Activated naive CD4-positive, alpha-beta T cell treated with anti-CD3 and anti-CD28 coated beads for 36 hours (primary cell): ENCODE measurements at regions of chr1 and their contacts with region 1.

Region 1: DNA sequence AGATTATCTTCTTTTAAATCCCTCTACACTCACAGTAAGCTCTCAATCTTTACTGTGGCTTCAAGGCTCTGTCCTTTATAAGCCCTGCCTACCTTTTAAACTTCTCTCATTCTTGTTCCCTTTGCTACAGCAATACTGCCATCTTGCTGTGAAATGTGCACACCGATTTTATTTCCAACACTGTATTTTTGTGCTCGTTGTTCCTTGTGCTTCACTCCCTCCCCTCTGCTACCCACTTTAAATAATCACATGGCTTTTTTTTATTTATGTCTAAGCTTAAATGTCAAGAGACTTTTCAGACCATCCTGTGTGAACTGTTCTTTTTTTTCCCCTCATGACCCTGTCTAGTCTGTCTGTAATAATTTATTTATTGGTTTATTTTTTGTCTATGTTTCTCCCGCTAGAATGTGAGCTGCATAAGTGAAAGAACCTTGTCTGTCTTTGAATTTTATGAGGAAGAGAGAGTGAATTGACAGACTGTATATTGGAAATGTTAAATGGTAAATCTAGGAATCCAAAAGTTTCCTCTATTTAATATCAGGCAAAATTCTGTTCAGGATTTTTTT is 45.7 kb downstream of the ABCD3 start:
- DNase-seq: peak; percentile 33
- H3K4me3 Mint-ChIP-seq: no peak overlapping the region
- H3K27ac Mint-ChIP-seq: peak overlapping the region; percentile 8
- H3K4me1 Mint-ChIP-seq: peaks cover 2% of the 10 kb centered on the region
- H3K27me3 Mint-ChIP-seq: no peaks in the 10 kb centered on the region

Region 2: GRCh38 chr1:94045465-94046056 is 418.3 kb before region 1 on chr1:
- CTCF ChIA-PET with region 1: interaction called, 8 read pairs
- intact Hi-C with region 1: loop called (anchors 1 kb)
- DNase-seq: peak; percentile 65
- H3K4me3 Mint-ChIP-seq: peak overlapping the region; percentile 37
- H3K27ac Mint-ChIP-seq: no peak overlapping the region
- H3K4me1 Mint-ChIP-seq: no peaks in the 10 kb centered on the region
- H3K27me3 Mint-ChIP-seq: peaks cover 14% of the 10 kb centered on the region

Region 3: DNA sequence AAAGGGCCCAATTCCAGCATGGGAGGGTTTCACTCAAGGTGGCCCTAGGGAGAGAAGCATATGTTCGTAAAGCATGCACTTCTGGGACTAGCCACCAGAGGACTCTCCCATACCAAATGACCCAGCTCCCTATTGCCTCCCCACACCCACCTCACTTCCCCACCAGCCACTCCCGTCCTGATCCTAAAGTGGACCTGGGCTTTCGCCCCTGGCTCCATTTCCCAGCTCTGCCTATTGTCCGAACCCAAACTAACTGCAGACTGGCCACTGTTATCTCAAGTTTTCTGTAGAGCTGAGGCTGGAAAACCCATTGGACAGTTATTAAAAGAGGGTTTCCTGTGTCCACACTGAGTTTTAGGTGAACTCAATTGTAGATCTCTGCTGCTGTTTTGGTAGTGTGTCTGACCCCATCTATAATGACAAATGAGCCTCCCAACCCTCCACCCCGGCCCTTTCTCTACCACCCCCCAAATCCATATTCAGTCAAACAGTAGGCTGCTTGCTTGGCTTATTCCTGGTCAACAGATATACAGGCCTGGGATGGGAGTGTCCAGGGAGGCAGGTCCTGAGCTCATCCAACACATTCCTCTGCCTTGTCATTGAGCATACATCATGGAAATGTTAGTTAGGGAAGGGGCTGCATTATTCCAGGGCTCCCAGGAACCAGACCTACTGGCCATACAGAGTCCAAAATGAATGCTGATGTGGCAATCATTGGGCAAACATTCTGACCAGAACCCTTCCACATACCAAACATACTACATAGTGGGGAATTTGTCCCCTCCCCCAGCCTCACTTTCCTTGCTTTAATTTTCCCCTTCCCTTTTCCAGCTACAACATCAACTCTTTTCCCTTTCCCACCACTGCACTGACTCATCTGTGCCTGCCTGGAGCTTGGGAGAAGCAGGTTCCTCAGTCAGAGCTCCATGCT is 402.1 kb before region 1 on chr1:
- CTCF ChIA-PET with region 1: interaction called, 9 read pairs
- intact Hi-C with region 1: loop called (anchors 1 kb)
- DNase-seq: peak; percentile 60
- H3K4me3 Mint-ChIP-seq: no peak overlapping the region
- H3K27ac Mint-ChIP-seq: no peak overlapping the region
- H3K4me1 Mint-ChIP-seq: no peaks in the 10 kb centered on the region
- H3K27me3 Mint-ChIP-seq: peaks cover 7% of the 10 kb centered on the region

Region 4: DNA sequence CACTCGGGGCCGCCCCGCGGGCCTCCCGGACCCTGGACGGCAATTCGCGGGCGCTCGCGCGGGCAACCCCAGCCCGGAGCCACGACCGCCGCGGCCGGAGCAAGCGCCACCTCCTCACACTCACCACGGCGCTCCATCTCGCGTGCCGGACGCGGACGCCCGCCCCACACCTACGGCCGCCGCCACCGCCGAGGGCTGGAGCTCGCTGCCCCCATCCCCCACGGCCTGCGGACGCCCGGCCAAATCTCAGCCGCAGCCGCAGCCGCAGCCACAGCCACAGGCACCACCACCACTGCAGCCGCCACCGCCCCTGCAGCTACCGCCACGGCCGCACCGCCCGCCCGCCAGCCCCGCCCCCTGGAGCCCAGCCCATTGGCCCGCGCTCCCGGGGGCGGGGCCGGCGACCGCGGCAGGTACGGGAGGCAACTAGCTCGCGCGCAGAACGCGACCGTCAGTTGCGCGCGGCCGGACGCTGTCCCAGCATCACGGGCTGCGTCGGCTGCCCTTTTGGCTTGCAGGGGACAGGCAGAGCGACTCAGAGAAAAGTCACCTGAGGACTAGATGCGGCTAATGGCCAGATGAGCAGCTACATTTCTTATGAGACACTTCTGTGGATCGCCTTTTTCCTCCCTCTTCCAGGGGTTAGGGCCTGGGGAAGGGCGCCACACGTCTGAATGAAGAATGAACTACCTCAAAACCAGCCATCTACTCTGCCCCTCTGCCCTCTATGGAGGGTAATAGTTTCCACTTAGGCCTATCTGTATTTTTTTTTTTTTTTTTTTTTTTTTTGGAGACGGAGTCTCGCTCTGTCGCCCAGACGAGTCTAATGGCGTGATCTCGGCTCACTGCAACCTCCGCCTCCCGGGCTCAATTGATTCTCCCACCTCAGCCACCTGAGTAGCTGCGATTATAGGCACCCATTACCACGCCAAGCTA is 226.3 kb before region 1 on chr1 and contains the start of gene ARHGAP29:
- CTCF ChIA-PET with region 1: interaction called, 3 read pairs
- intact Hi-C with region 1: loop called (anchors 5 kb)
- DNase-seq: peak; percentile 67
- H3K4me3 Mint-ChIP-seq: peak within 1 kb of the TSS; percentile 68
- H3K27ac Mint-ChIP-seq: no peak within 1 kb of the TSS
- H3K4me1 Mint-ChIP-seq: peaks cover 7% of the 10 kb centered on the region
- H3K27me3 Mint-ChIP-seq: peaks cover 64% of the 10 kb centered on the region
- total RNA-seq, gene ARHGAP29: 0.37 to 0.48 TPM

Region 5: GRCh38 chr1:94481473-94481933 is 17.7 kb after region 1 on chr1:
- CTCF ChIA-PET with region 1: interaction called, 17 read pairs
- intact Hi-C with region 1: no loop called
- DNase-seq: peak; percentile 44
- H3K4me3 Mint-ChIP-seq: no peak overlapping the region
- H3K27ac Mint-ChIP-seq: no peak overlapping the region
- H3K4me1 Mint-ChIP-seq: no peaks in the 10 kb centered on the region
- H3K27me3 Mint-ChIP-seq: no peaks in the 10 kb centered on the region

Region 6: DNA sequence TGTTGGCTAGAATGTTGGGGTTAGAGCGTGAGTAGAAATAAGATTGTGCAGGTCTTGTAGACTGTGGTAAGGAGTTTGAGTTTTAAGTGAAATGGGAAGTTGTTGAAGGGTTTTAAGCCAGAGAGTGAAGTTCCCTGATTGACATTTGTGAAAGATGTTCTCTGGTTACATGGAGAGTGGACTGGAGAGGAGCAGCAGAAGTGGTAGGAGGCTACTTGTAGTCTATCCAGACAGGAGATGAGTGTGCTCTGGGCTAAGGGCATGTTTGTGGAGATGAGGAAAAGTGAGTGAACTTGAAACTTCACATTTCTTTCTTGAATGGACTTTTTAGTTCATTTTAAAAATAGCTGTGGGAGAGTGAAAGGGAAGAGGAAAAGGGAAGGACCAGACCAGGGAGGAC is 40.8 kb after region 1 on chr1:
- CTCF ChIA-PET with region 1: no interaction called
- intact Hi-C with region 1: no loop called
- DNase-seq: no peak
- H3K4me3 Mint-ChIP-seq: no peak overlapping the region
- H3K27ac Mint-ChIP-seq: no peak overlapping the region
- H3K4me1 Mint-ChIP-seq: no peaks in the 10 kb centered on the region
- H3K27me3 Mint-ChIP-seq: no peaks in the 10 kb centered on the region

Region 7: GRCh38 chr1:94553323-94553730 is 89.5 kb after region 1 on chr1:
- CTCF ChIA-PET with region 1: no interaction called
- intact Hi-C with region 1: no loop called
- DNase-seq: no peak
- H3K4me3 Mint-ChIP-seq: no peak overlapping the region
- H3K27ac Mint-ChIP-seq: no peak overlapping the region
- H3K4me1 Mint-ChIP-seq: no peaks in the 10 kb centered on the region
- H3K27me3 Mint-ChIP-seq: peaks cover 7% of the 10 kb centered on the region